Left lung (tissue), 14 donors: ENCODE measurements at regions of chr1 and their contacts with region 1.

Region 1: DNA sequence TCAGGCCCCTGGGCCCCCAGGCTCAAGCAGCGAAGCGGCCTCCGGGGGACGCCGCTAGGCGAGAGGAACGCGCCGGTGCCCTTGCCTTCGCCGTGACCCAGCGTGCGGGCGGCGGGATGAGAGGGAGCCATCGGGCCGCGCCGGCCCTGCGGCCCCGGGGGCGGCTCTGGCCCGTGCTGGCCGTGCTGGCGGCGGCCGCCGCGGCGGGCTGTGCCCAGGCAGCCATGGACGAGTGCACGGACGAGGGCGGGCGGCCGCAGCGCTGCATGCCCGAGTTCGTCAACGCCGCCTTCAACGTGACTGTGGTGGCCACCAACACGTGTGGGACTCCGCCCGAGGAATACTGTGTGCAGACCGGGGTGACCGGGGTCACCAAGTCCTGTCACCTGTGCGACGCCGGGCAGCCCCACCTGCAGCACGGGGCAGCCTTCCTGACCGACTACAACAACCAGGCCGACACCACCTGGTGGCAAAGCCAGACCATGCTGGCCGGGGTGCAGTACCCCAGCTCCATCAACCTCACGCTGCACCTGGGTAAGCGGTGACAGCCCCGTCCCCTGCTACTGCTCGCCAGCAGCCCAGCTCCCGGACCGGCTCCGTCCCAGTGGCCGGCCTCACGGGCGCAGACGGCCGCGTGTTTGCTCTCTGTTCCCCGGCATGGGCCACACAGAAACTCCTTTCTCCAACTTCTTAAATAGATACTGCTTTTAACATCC is 539 bp downstream of the LAMC1 start:
- DNase-seq: peak in 3 of 4 donors; percentile 73 to 91 (median 84)
- ATAC-seq: peak; percentile 70
- H3K4me3 ChIP-seq: peak overlapping the region; percentile 62 to 68
- H3K27ac ChIP-seq: peak overlapping the region; percentile 96 to 99
- H3K4me1 ChIP-seq: peaks cover 6 to 29% of the 10 kb centered on the region in 2 donors
- H3K27me3 ChIP-seq: peaks cover 0 to 46% of the 10 kb centered on the region in 2 donors
- CTCF ChIP-seq: peak in 1 of 2 donors; percentile 20

Region 2: GRCh38 chr1:182962554-182963115 is 61.1 kb before region 1 on chr1:
- intact Hi-C with region 1: loop called in 1 of 2 experiments (anchors 10 kb)
- DNase-seq: peak in 3 of 4 donors; percentile 55 to 91 (median 77)
- ATAC-seq: peak; percentile 100
- H3K4me3 ChIP-seq: no peak overlapping the region
- H3K27ac ChIP-seq: peak overlapping the region; percentile 14 to 71
- H3K4me1 ChIP-seq: peaks cover 0 to 7% of the 10 kb centered on the region in 2 donors
- H3K27me3 ChIP-seq: no peaks in the 10 kb centered on the region
- CTCF ChIP-seq: peak; percentile 62 to 69

Region 3: GRCh38 chr1:183101841-183102276 is 78.1 kb after region 1 on chr1:
- intact Hi-C with region 1: loop called in 1 of 2 experiments (anchors 10 kb)
- DNase-seq: no peak
- ATAC-seq: peak; percentile 32
- H3K4me3 ChIP-seq: no peak overlapping the region
- H3K27ac ChIP-seq: no peak overlapping the region
- H3K4me1 ChIP-seq: peaks cover 8 to 31% of the 10 kb centered on the region in 2 donors
- H3K27me3 ChIP-seq: no peaks in the 10 kb centered on the region
- CTCF ChIP-seq: no peak